ENCODE measurements at regions of chr16 and their contacts with region 1.

Region 1: GRCh38 chr16:71610936-71611871 is 14.8 kb upstream of the MARVELD3 start:
- DNase-seq: peak; percentile 53 to 98
- H3K4me3 ChIP-seq: peak overlapping the region in 1 of 4 experiments; percentile 38; a peak in 1 of 8 replicates
- H3K27ac ChIP-seq: no peak overlapping the region
- H3K4me1 ChIP-seq: peaks cover 0 to 2% (median 0%) of the 10 kb centered on the region in 4 experiments; a peak in 1 of 7 replicates
- H3K27me3 ChIP-seq: no peaks in the 10 kb centered on the region
- CTCF ChIP-seq: peak; percentile 84 to 95 (median 92)
- EP300 ChIP-seq: peak in 1 of 2 experiments; percentile 60; a peak in 1 of 3 replicates
- POLR2A ChIP-seq: no peak
- RAD21 ChIP-seq: peak; percentile 87 to 93

Region 2: DNA sequence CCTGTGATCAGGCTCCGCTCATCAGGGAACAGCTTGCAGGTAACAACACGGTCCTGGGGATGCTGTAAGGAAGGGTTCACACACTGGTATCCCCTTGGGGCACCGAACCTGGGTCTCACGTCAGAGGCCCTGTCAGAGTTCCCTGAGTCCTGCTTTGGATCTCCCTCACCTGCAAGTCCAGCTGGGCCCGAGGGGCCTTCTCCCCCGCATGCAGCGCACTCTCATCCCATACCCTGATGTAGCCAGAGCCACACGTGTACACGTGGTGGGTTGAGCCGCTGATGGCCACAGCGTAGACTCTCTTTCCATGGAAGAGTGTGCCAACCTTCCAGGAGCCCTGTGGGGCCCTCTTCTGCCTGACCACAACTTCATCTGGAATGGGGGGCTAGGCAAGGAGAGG is 179.3 kb before region 1 on chr16:
- CTCF ChIA-PET with region 1: interaction called, 12 read pairs
- POLR2A ChIA-PET with region 1: no interaction called
- DNase-seq: no peak
- H3K4me3 ChIP-seq: no peak overlapping the region
- H3K27ac ChIP-seq: no peak overlapping the region
- H3K4me1 ChIP-seq: peaks cover 0 to 3% (median 0%) of the 10 kb centered on the region in 4 experiments; a peak in 1 of 7 replicates
- H3K27me3 ChIP-seq: 0 out of 7 replicates have a peak, but pooled peaks cover 0 to 3% (median 0%) of the 10 kb centered on the region in 4 experiments
- CTCF ChIP-seq: no peak
- EP300 ChIP-seq: no peak
- POLR2A ChIP-seq: no peak
- RAD21 ChIP-seq: no peak

Region 3: DNA sequence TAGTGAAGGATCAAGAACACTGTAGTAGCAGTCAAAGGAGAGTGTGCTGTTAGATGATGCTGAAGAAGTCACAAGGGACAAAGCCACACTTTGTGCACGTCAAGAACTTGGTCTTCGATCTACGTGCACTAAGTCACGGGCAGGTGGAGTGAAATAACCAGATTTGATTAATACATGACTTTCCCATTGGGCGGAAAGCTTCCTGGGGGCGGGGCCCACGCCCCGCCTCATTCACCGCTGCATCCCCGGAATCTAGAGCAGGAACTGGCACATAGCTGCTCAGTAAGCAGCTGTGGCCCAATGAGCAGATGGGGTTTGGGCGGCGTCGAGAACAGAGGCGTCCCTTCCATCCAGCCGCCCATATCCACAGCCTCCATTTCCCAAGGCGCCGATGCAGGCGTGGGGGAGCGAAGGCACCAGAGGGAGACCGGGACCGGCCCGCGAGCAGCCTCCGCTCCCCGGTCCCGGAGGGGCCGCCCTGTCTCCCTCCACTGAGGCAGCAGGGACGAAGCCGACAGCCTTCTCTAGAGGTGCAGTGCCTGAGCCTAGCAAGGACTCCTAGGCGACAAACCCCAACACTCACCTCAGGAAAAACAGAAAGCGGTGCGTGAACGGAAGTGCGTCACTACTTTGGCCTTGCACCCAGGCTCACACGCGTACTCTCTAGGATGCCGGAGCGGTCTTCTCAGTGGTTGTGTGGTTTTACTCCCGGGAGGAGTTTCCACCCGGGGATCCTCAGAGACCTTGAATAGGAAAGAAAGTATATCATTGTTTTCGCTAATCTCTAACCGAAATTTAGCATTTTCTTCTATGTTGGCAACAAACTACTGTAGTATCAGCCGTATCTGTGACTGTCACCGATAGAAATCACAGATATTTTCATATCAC is 127.0 kb before region 1 on chr16:
- CTCF ChIA-PET with region 1: interaction called, 11 read pairs
- POLR2A ChIA-PET with region 1: no interaction called
- DNase-seq: peak in 1 of 2 experiments; percentile 78
- H3K4me3 ChIP-seq: peak overlapping the region; percentile 53 to 82 (median 80)
- H3K27ac ChIP-seq: peak overlapping the region; percentile 97
- H3K4me1 ChIP-seq: no peaks in the 10 kb centered on the region
- H3K27me3 ChIP-seq: no peaks in the 10 kb centered on the region
- CTCF ChIP-seq: no peak
- EP300 ChIP-seq: no peak
- POLR2A ChIP-seq: peak; percentile 77 to 97
- RAD21 ChIP-seq: no peak; a peak in 1 of 4 replicates

Region 4: GRCh38 chr16:71537643-71538042 is 73.6 kb before region 1 on chr16:
- CTCF ChIA-PET with region 1: interaction called, 140 read pairs
- POLR2A ChIA-PET with region 1: no interaction called
- DNase-seq: peak in 1 of 2 experiments; percentile 76
- H3K4me3 ChIP-seq: no peak overlapping the region
- H3K27ac ChIP-seq: no peak overlapping the region
- H3K4me1 ChIP-seq: no peaks in the 10 kb centered on the region
- H3K27me3 ChIP-seq: no peaks in the 10 kb centered on the region
- CTCF ChIP-seq: peak; percentile 45 to 89 (median 84)
- EP300 ChIP-seq: no peak
- POLR2A ChIP-seq: no peak
- RAD21 ChIP-seq: peak; percentile 87 to 91

Region 5: DNA sequence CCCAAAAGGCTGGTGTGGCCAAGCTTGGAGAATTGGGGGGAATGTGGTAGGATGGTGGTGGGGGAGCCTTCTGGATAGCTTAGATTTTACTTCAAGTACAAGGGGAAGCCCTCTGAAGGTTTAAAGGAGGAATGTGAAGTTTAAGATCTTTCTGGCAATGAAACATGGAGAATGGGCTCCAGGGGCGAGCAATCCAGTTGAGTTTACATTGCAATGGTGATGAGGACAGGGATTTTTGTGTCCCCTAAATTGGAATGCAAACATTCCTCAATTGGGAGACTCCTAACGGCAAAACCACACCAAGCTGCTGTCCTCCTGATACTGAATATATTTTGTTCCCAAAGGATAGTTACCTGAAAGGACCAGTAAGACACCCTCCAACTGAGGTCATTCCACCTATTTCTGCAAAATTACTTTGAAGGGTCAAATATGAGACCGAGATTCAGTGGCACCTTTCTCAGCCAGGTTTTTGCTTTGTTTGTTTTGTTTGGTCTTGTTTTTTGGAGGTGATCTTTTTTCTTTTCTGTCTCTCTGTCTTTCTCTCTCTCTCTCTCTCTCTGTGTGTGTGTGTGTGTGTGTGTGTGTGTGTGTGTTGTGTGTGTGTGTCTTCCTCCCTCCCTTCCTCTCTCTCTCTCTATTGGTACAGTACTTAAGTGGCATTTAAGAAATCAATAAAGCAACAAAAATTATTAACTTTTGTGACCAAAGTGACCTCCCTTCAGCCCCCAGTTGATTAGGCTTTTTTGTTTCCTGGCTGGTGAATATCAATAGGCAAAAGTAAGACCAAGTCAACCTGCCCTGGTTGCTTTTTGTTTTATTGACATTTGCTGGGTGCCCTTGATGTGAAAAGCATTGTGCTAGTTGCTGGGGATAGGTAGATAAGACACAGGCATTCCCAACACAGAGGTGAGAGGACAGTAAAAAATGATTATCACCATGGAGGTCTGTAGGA is 17.9 kb before region 1 on chr16:
- CTCF ChIA-PET with region 1: interaction called, 12 read pairs
- POLR2A ChIA-PET with region 1: no interaction called
- DNase-seq: no peak
- H3K4me3 ChIP-seq: no peak overlapping the region
- H3K27ac ChIP-seq: no peak overlapping the region
- H3K4me1 ChIP-seq: no peaks in the 10 kb centered on the region
- H3K27me3 ChIP-seq: no peaks in the 10 kb centered on the region; a peak in 1 of 7 replicates
- CTCF ChIP-seq: no peak
- EP300 ChIP-seq: no peak
- POLR2A ChIP-seq: no peak
- RAD21 ChIP-seq: no peak

Region 6: DNA sequence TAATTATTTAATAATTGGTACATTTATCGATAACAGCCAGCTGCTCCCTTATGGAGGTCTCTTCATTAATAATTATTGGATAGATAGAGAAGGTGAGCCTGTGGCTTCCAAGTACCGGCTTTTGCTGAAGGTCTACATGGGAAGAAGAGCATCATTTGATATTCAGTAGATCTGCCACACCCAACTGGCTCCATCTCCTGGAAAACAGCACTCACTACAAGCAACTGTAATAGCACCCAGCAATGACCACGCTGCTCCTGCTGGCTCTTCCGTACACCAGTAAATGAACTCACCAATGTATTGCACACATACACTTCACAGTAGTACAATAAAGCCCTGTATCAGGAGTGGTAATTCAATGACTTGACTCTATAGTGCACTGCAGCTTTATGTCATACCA is 34.2 kb after region 1 on chr16:
- CTCF ChIA-PET with region 1: interaction called, 20 read pairs
- POLR2A ChIA-PET with region 1: no interaction called
- DNase-seq: no peak
- H3K4me3 ChIP-seq: no peak overlapping the region
- H3K27ac ChIP-seq: no peak overlapping the region
- H3K4me1 ChIP-seq: no peaks in the 10 kb centered on the region
- H3K27me3 ChIP-seq: no peaks in the 10 kb centered on the region
- CTCF ChIP-seq: peak; percentile 54 to 79 (median 77)
- EP300 ChIP-seq: no peak
- POLR2A ChIP-seq: no peak
- RAD21 ChIP-seq: peak; percentile 67 to 78

Region 7: GRCh38 chr16:71903608-71904007 is 292.4 kb after region 1 on chr16:
- CTCF ChIA-PET with region 1: no interaction called
- POLR2A ChIA-PET with region 1: no interaction called
- DNase-seq: no peak
- H3K4me3 ChIP-seq: no peak overlapping the region
- H3K27ac ChIP-seq: no peak overlapping the region
- H3K4me1 ChIP-seq: peaks cover 0 to 2% (median 0%) of the 10 kb centered on the region in 4 experiments; a peak in 3 of 7 replicates
- H3K27me3 ChIP-seq: no peaks in the 10 kb centered on the region
- CTCF ChIP-seq: no peak
- EP300 ChIP-seq: no peak
- POLR2A ChIP-seq: no peak
- RAD21 ChIP-seq: no peak